ENCODE measurements at regions of chr5 and their contacts with region 1.

Region 1: DNA sequence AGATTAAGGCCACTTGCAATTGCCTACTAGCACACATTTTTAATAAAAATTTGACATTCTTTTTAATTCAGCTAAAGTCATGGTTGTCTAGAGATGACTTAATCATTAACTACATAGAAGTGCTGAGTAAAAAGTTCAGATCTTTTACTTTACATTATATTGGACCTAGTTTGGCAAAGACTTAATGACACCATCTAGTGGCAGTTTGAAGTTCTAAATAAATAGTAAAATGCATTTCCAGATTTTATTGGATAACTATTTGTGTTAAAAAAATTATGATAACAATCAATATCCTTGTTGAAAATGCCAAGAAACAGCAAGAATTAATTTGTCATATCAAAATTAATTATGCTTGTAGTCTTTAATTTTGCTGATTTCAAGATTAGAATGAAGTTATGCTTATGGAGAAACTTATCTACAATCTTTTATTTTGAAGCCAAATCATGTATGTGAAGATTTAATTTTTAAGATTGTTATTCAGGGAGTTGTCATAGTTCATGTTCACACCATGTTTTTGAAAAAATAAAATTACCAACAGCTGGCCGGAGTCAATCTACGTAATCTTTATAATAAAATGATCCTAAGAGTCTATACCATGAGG is 69.6 kb upstream of the PJA2 start:
- DNase-seq: peak; percentile 23
- CTCF ChIP-seq: peak; percentile 46

Region 2: DNA sequence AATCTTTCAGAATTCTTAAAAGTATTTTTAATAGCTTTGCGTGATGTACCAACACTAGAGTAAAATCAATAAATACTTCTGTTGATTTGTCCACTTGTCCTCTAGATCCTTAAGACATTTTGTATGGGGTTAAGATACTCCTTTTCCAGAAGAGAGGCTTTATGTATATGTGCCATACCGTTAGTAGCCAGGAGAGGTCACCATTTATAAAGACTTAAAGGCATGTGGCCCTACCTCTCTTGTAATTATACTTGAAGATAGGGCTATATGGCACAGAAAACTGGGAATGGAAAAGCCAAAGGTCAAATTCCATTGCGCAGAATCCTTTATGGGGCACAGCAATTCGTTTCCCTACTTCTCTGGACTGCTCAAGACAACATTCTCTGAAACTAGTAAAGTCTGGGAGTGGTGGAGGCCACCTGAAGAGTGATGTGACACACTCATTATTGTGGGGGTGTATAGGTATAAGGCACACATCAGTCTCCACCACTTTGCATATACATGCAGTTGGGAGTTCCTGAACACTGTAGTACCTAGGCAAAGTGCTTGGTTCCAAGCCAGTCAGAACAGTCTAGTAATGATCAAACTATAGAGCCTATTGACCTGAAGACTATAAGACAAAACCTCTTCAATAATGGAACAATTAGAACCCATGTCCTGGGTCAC is 957.4 kb before region 1 on chr5:
- in situ Hi-C with region 1: loop called (anchors 25 kb)
- DNase-seq: peak; percentile 37
- CTCF ChIP-seq: peak; percentile 60